Mammary epithelial cell (primary cell): ENCODE measurements at regions of chr4 and their contacts with region 1.

Region 1: GRCh38 chr4:109207060-109207459 is 95.4 kb downstream of the COL25A1 start:
- DNase-seq: peak; percentile 11
- H3K4me3 ChIP-seq: no peak overlapping the region
- H3K27ac ChIP-seq: no peak overlapping the region
- H3K4me1 ChIP-seq: no peaks in the 10 kb centered on the region
- H3K27me3 ChIP-seq: peaks cover 2% of the 10 kb centered on the region
- CTCF ChIP-seq: no peak

Region 2: DNA sequence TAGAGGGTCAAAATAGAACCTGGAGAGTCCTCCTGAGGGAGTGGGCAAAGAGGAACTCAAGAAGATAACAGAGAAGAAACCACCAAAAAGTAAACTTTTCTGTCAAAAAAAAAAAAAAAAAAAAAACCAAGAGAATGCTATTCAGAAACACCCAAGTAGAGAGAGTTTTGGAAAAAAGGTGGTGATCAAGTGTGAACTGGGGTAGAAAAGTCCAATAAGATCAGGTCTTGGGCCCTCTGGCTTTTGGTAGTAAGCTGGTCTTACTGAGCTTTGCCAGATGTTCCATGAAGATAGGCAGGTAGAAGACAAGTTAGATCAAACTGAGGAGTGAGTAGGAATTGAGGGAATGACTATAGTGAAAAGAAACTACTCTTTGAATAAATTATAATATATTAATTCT is 72.1 kb before region 1 on chr4:
- CTCF ChIA-PET with region 1: no interaction called
- dilution Hi-C with region 1: loop called (anchors 5 kb)
- in situ Hi-C with region 1: no loop called
- intact Hi-C with region 1: no loop called
- DNase-seq: no peak
- H3K4me3 ChIP-seq: no peak overlapping the region
- H3K27ac ChIP-seq: no peak overlapping the region
- H3K4me1 ChIP-seq: no peaks in the 10 kb centered on the region
- H3K27me3 ChIP-seq: no peaks in the 10 kb centered on the region
- CTCF ChIP-seq: no peak

Region 3: GRCh38 chr4:109164011-109164410 is 43.0 kb before region 1 on chr4:
- CTCF ChIA-PET with region 1: no interaction called
- dilution Hi-C with region 1: no loop called
- in situ Hi-C with region 1: no loop called
- intact Hi-C with region 1: no loop called
- DNase-seq: no peak
- H3K4me3 ChIP-seq: no peak overlapping the region
- H3K27ac ChIP-seq: no peak overlapping the region
- H3K4me1 ChIP-seq: no peaks in the 10 kb centered on the region
- H3K27me3 ChIP-seq: no peaks in the 10 kb centered on the region
- CTCF ChIP-seq: no peak

Region 4: DNA sequence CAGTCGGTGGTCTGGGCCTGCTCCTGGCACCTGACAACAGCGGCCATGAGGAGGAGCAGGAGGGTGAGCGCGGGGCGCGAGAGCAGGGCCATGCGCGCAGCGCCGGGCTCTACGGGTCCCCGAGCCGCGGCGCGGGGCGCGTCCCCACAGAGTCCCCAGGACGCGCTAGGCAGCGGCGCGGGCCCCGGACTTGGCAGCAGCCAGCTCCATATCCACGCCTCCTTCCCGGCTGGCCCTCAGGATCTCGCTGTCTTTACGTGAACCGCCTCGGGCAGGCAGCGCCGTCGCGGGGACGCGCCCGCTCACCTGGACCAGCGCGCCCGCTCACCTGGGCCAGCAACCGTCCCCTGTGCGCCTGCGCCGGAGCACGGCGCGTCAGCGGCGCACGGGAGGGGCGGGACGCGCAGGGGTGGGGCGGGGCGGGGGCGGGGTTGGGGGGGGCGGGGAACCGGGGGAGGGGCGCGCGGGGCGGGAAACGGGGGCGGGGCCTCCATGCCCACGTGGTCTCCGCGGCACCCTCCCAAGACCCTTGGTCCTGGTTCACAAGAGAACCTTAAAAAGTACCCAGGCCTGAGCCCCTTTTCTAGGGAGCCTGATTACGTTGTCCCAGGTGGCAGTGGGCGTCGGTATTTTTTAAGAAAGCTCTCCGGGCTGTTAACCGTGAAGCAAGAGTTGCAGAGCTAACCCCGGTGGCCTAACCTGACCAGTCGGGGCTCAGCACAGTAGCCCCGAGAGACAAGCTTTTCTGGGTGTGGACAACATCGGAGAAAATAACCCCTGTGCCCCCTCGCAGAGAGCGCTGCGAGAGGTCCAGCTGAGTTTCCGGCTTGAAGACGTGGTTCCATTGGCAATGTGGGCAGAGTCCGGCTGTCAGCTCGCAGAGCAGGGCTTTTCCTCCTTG is 522.9 kb after region 1 on chr4 and contains the start of gene PLA2G12A:
- CTCF ChIA-PET with region 1: no interaction called
- dilution Hi-C with region 1: no loop called
- in situ Hi-C with region 1: no loop called
- intact Hi-C with region 1: no loop called
- DNase-seq: peak; percentile 93
- H3K4me3 ChIP-seq: peak within 1 kb of the TSS; percentile 70 to 81 (median 78)
- H3K27ac ChIP-seq: peak within 1 kb of the TSS; percentile 56
- H3K4me1 ChIP-seq: peaks cover 8% of the 10 kb centered on the region
- H3K27me3 ChIP-seq: no peaks in the 10 kb centered on the region
- CTCF ChIP-seq: no peak
- total RNA-seq, gene PLA2G12A: 38.9 to 59.0 TPM